ENCODE measurements at regions of chr6 and their contacts with region 1.

Region 1: GRCh38 chr6:32406857-32407256 is at the start of gene BTNL2:
- DNase-seq: no peak
- H3K4me3 ChIP-seq: no peak within 1 kb of the TSS
- H3K27ac ChIP-seq: no peak within 1 kb of the TSS
- H3K4me1 ChIP-seq: no peaks in the 10 kb centered on the region
- H3K27me3 ChIP-seq: peaks cover 0 to 39% of the 10 kb centered on the region in 2 donors
- CTCF ChIP-seq: no peak

Region 2: DNA sequence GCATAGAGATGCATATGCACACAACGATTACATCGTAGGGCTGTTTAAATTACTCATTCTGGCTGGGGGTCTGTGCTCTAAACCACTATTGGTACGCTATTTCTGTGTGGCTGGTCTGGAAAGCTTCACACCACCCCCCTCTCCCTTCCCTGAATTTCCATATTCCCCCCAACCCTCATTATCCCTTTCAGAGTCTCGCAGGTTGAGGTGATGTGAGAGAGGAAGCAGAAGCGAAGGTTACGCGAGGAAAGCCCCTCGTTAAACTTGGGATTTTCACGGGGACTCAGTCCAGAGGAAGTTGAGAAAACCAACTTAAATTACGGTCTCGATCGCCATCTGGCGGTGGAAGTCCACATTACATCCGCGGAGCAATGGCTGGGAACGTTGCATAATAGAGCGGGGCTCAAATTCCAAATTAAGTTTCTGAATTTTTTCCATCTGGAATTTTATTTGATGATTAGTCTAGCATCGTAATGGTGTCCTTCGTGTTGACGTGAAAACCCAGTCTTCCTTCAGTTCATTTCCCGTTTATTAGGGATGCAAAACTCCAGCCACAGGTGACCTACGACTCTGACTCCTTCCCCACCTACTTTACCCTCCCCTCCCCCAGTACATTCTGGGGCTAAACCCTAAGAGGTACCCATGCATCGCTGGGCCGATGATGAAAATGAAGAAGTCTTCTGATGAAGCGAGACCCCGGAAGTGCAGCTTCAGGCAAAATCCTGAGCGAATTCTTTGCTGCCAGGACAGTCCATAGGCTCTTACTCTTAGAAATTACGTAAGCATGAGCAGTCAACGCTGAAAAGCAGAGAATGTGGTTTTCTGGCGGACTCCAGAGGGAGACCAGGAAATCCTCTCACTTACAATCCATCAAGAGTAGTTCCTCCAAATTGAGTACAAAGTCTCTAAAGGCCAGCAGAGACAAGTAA is 390.3 kb after region 1 on chr6:
- intact Hi-C with region 1: loop called (anchors 5 kb)
- DNase-seq: peak; percentile 78 to 85
- H3K4me3 ChIP-seq: no peak overlapping the region
- H3K27ac ChIP-seq: no peak overlapping the region
- H3K4me1 ChIP-seq: peaks cover 0 to 3% (median 0%) of the 10 kb centered on the region in 4 donors
- H3K27me3 ChIP-seq: peaks cover 0 to 65% of the 10 kb centered on the region in 2 donors
- CTCF ChIP-seq: peak; percentile 84 to 86